IMR-90 (cell line): ENCODE measurements at regions of chr22 and their contacts with region 1.

Region 1: GRCh38 chr22:26658671-26659478 is 1.5 kb downstream of the MIAT start:
- DNase-seq: peak; percentile 97
- ATAC-seq: peak; percentile 86
- H3K4me3 ChIP-seq: peak overlapping the region; percentile 13
- H3K27ac ChIP-seq: no peak overlapping the region
- H3K4me1 ChIP-seq: peaks cover 5% of the 10 kb centered on the region; the same call in 1 of the 2 replicates
- H3K27me3 ChIP-seq: peaks cover 28% of the 10 kb centered on the region
- CTCF ChIP-seq: no peak
- POLR2A ChIP-seq: no peak
- RAD21 ChIP-seq: no peak

Region 2: GRCh38 chr22:26511857-26512793 is 146.8 kb before region 1 on chr22 and contains the start of gene TFIP11:
- CTCF ChIA-PET with region 1: no interaction called
- POLR2A ChIA-PET with region 1: no interaction called
- dilution Hi-C with region 1: no loop called
- in situ Hi-C with region 1: no loop called
- intact Hi-C with region 1: loop called (anchors 2 kb)
- DNase-seq: peak; percentile 90
- ATAC-seq: peak; percentile 95
- H3K4me3 ChIP-seq: peak within 1 kb of the TSS; percentile 96
- H3K27ac ChIP-seq: peak within 1 kb of the TSS; percentile 86
- H3K4me1 ChIP-seq: peaks cover 2% of the 10 kb centered on the region
- H3K27me3 ChIP-seq: no peaks in the 10 kb centered on the region
- CTCF ChIP-seq: 0 out of 2 replicates have a peak, but pooled peaks have one; percentile 9
- POLR2A ChIP-seq: peak; percentile 68; the same call in 1 of the 2 replicates
- RAD21 ChIP-seq: no peak; the same call in 1 of the 2 replicates
- total RNA-seq, gene TFIP11: 37.5 and 43.2 TPM in 2 replicates

Region 3: GRCh38 chr22:26642465-26643417 is 16.1 kb before region 1 on chr22:
- CTCF ChIA-PET with region 1: no interaction called
- POLR2A ChIA-PET with region 1: interaction called, 10 read pairs
- dilution Hi-C with region 1: no loop called
- in situ Hi-C with region 1: no loop called
- intact Hi-C with region 1: no loop called
- DNase-seq: no peak
- ATAC-seq: no peak
- H3K4me3 ChIP-seq: no peak overlapping the region
- H3K27ac ChIP-seq: no peak overlapping the region
- H3K4me1 ChIP-seq: peaks cover 9% of the 10 kb centered on the region
- H3K27me3 ChIP-seq: peaks cover 13% of the 10 kb centered on the region
- CTCF ChIP-seq: no peak
- POLR2A ChIP-seq: no peak
- RAD21 ChIP-seq: no peak